ENCODE measurements at regions of chr6 and their contacts with region 1.

Region 1: DNA sequence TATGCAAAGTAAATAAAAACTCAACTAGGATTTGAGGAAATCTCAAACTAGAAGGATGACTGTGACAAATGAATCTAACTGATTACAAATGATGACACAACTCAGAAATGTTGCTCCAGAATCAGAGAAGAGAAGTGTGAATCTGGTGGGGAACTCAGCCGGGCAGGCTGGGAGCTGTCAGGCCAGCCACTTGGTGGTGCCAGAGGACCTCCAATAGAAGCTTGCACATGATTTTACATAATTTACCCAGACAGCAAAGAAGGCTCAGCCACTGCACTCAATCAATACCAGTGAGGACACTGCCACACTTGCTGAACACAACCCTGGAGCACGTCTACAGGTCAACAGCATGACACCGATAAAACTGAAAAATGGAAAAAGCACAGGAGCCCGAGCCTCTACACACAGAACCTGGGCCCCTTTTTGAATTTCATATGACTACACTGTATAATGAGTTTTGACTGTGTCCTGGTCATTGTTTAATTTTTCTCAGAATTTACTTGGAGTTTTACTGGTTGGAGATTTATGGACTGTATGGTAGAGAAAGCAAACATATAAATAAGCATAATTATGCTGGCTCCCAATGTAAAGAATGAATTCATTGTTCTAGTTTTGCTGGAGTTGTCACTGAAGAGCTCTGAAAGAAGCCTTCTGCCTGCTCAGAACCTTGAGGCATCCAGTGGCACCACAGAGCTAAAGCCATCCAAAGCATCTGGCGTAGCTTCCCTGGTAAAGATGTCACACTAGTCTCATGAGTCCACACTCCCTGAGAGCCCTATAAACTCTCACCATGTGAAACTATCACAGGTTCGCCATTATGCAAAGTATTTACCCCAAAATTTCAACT is 296.5 kb downstream of the THBS2 start:
- DNase-seq: peak; percentile 64 to 83
- ATAC-seq: peak; percentile 74 to 94 (median 90)
- H3K4me3 ChIP-seq: no peak overlapping the region
- H3K27ac ChIP-seq: no peak overlapping the region
- H3K4me1 ChIP-seq: peaks cover 11% of the 10 kb centered on the region
- H3K27me3 ChIP-seq: peaks cover 0 to 12% (median 0%) of the 10 kb centered on the region in 3 donors
- CTCF ChIP-seq: peak; percentile 88

Region 2: DNA sequence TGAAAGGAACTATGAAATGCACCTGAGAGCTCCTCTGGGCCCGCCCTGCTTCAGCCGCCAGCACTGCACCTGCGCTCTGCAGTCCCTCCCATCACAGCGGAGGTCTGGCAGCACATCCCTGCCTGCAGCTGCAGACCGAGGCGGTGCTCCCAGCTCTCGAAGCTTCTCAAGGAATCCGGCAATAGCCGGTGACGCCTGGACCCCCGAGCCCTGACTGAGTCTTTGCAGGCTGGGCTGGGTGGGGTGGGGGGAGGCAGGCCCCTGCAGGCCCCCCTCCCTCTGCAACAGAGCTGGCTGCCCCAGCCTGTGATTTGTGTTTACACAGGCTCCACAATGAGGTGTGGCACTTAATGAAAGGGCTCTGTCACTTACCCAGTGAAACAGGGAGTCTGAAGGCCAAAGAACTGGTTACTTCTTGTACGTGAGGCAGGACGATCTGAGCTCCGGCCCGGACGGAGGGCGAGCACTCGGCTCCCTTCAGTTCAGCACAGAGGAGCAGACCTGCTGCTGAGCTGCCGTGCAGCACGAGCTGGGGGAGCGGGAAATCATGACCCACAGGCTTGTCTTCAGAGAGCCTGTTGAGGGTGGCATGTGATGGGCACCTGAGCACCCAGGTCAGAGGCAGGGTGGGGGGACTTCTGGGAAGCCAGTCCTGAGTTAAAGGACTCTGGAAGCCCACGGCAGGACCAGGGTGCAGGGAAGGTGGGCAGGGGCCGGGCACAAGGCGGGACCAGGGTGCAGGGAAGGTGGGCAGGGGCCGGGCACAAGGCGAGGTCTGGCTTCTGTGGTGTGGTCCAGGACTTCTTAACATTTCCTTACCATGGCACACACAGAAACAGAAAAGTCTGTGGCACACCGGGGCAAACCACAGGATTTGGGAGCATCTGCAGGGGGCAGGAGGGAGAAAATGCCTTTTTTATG is 488.8 kb after region 1 on chr6:
- intact Hi-C with region 1: loop called in 1 of 2 experiments (anchors 10 kb)
- DNase-seq: no peak
- ATAC-seq: no peak
- H3K4me3 ChIP-seq: no peak overlapping the region
- H3K27ac ChIP-seq: no peak overlapping the region
- H3K4me1 ChIP-seq: no peaks in the 10 kb centered on the region
- H3K27me3 ChIP-seq: no peaks in the 10 kb centered on the region
- CTCF ChIP-seq: no peak

Region 3: DNA sequence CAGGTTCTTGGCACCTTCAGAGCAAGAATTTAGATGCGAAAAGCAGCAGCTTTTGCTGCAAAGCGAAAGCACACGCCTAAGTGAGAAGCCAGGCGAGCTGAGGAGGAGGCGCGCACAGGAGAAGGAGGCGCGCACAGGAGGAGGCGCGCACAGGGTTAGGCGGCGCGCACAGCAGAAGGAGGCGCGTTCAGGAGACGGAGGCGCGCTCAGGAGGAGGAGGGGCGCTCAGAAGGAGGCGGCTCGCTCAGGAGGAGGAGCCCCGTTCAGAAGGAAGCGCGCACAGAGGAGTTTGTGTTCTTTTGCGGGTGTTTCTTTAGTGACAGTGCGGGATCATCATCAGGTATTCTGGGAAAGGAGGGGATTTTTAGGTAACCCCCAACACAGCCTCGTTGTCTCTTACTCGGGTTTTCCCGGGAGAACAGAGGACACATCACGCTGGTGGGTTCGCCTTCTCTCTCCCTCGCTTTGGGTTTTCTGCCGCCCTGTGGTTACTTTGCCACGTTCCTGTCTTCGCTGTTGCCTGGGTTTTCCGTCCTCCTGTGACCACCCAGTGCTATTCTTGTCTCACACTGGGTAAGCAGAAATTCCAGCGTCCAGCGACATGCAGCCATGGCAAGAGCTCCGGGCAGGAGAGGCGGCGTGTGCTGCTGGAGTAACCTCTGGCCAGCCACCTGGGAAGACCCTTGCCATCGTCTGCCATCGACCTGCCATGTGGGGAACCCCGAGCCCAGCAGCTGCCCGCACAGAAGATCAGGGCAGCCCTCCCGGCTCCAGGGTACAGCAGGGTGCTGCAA is 697.7 kb after region 1 on chr6:
- intact Hi-C with region 1: loop called in 1 of 2 experiments (anchors 10 kb)
- DNase-seq: peak; percentile 69 to 87
- ATAC-seq: peak; percentile 91 to 99 (median 95)
- H3K4me3 ChIP-seq: peak overlapping the region; percentile 61
- H3K27ac ChIP-seq: peak overlapping the region; percentile 71
- H3K4me1 ChIP-seq: no peaks in the 10 kb centered on the region
- H3K27me3 ChIP-seq: no peaks in the 10 kb centered on the region
- CTCF ChIP-seq: no peak